MCF 10A (cell line): ENCODE measurements at regions of chr9 and their contacts with region 1.

Region 1: DNA sequence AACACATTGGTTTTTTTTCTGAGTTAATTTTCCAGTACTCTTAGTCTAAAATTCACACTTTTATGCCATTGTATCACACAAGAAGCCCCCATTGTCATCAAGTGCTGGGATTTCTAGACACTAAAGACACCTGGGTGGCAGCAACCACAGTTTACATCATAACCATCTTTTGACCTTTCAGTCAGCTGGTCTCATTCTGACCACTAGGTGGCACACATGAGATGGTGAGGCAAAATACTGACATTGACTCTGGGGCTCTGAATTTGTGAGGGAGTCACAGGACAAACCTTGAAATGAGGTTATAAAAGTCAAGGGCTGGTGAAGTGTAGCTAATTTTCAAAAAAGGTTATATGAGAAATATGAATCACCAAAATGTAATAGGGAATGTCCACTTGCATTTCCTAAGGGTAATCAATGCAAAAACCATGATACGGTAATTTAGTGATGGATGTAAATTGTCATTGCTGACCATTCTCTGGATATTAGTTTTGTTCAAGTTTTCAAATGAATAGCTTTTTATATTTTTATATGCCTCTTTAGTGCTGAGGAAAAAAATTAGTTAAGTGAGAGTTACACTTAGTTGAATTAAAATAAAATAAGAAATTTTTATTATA is 229.4 kb downstream of the DMAC1 start:
- DNase-seq: peak; percentile 81
- H3K4me3 Mint-ChIP-seq: no peak overlapping the region
- H3K27ac Mint-ChIP-seq: no peak overlapping the region
- H3K4me1 Mint-ChIP-seq: no peaks in the 10 kb centered on the region
- H3K27me3 Mint-ChIP-seq: peaks cover 26% of the 10 kb centered on the region
- CTCF ChIP-seq: peak; percentile 86

Region 2: DNA sequence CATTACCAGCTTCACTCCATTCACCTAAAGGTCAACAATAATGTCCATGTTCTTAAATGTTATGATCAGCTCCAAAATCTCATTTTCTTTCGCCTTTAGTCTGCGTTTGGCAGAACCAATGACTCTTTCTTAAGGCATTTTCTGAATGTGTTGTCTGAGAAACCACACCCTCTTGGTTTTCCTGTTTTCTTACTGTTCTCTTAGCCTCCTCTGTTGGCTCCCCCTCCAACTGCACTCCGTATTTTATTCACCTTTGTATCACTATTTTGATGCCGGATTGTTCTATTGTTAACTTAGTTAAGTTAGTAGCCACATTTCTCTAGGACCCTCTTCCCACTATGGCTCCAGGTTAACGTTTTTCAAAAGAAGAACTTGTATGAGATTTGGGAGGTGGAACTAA is 43.7 kb after region 1 on chr9:
- CTCF ChIA-PET with region 1: interaction called, 3 read pairs
- POLR2A ChIA-PET with region 1: no interaction called
- intact Hi-C with region 1: loop called (anchors 1 kb)
- DNase-seq: peak; percentile 21
- H3K4me3 Mint-ChIP-seq: no peak overlapping the region
- H3K27ac Mint-ChIP-seq: peak overlapping the region; percentile 32
- H3K4me1 Mint-ChIP-seq: peaks cover 11% of the 10 kb centered on the region
- H3K27me3 Mint-ChIP-seq: no peaks in the 10 kb centered on the region
- CTCF ChIP-seq: peak; percentile 21

Region 3: GRCh38 chr9:8604201-8604600 is 1034.0 kb after region 1 on chr9:
- CTCF ChIA-PET with region 1: no interaction called
- POLR2A ChIA-PET with region 1: no interaction called
- intact Hi-C with region 1: no loop called
- DNase-seq: no peak
- H3K4me3 Mint-ChIP-seq: no peak overlapping the region
- H3K27ac Mint-ChIP-seq: no peak overlapping the region
- H3K4me1 Mint-ChIP-seq: no peaks in the 10 kb centered on the region
- H3K27me3 Mint-ChIP-seq: no peaks in the 10 kb centered on the region
- CTCF ChIP-seq: no peak

Region 4: GRCh38 chr9:8857926-8858595 is 1287.8 kb after region 1 on chr9:
- CTCF ChIA-PET with region 1: no interaction called
- POLR2A ChIA-PET with region 1: no interaction called
- intact Hi-C with region 1: loop called (anchors 10 kb)
- DNase-seq: no peak
- H3K4me3 Mint-ChIP-seq: peak overlapping the region; percentile 28
- H3K27ac Mint-ChIP-seq: no peak overlapping the region
- H3K4me1 Mint-ChIP-seq: no peaks in the 10 kb centered on the region
- H3K27me3 Mint-ChIP-seq: no peaks in the 10 kb centered on the region
- CTCF ChIP-seq: no peak

Region 5: GRCh38 chr9:9002826-9003583 is 1432.8 kb after region 1 on chr9:
- CTCF ChIA-PET with region 1: interaction called, 7 read pairs
- POLR2A ChIA-PET with region 1: no interaction called
- intact Hi-C with region 1: loop called (anchors 5 kb)
- DNase-seq: peak; percentile 13
- H3K4me3 Mint-ChIP-seq: no peak overlapping the region
- H3K27ac Mint-ChIP-seq: no peak overlapping the region
- H3K4me1 Mint-ChIP-seq: no peaks in the 10 kb centered on the region
- H3K27me3 Mint-ChIP-seq: no peaks in the 10 kb centered on the region
- CTCF ChIP-seq: peak; percentile 26

Region 6: GRCh38 chr9:9352877-9353481 is 1782.8 kb after region 1 on chr9:
- CTCF ChIA-PET with region 1: interaction called, 3 read pairs
- POLR2A ChIA-PET with region 1: no interaction called
- intact Hi-C with region 1: loop called (anchors 1 kb)
- DNase-seq: peak; percentile 18
- H3K4me3 Mint-ChIP-seq: no peak overlapping the region
- H3K27ac Mint-ChIP-seq: no peak overlapping the region
- H3K4me1 Mint-ChIP-seq: no peaks in the 10 kb centered on the region
- H3K27me3 Mint-ChIP-seq: no peaks in the 10 kb centered on the region
- CTCF ChIP-seq: peak; percentile 39